ENCODE measurements at regions of chr2 and their contacts with region 1.

Region 1: DNA sequence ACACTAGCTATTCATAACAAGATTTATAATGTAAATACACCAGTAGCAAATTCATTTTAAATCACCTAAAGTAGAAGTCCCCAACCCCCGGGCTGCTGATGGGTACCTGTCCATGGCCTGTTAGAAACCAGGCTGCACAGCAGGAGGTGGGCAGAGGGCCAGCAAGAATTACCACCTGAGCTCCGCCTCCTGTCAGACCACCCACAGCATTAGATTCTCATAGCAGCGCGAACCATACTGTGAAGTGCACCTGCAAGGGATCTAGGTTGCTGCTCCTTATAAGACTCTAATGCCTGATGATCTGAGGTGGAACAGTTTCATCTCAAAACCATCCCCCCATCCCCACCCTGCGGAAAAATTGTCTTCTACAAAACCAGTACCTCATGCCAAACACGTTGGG is 71.3 kb downstream of the KANSL1L start:
- DNase-seq: no peak

Region 2: DNA sequence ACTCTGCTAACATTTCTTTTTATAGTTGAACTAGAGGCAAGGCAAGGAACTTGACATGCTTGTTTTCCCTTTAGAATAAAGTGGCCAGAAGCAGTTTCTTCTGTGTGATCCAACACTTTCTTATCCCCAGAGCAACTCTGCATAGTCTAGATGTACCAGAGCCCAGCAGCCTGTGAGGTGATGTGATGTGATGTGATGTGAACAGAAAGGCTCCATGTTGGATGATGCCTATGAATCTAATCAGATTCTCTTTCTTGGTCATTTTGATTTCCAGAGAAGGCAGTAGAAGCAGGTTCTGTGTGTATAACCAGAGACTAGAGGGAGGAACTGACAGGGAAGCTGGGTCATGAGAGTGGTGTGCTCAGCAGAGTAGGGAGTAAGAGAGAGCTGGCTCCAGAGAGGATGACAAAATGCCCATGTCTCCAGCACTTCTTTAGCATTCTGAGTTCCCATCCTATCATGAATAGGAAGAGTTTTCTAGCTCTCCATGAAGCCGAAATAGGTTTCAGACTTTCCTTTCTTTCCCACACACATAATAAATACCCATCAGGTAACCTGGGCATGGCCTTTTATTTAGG is 1724.4 kb before region 1 on chr2:
- intact Hi-C with region 1: loop called in 1 of 2 experiments (anchors 5 kb)
- DNase-seq: no peak

Region 3: GRCh38 chr2:209917154-209918047 is 182.5 kb before region 1 on chr2:
- intact Hi-C with region 1: no loop called
- DNase-seq: peak; percentile 63

Region 4: GRCh38 chr2:210527286-210527685 is 427.3 kb after region 1 on chr2:
- intact Hi-C with region 1: no loop called
- DNase-seq: no peak

Measured in posterior vena cava (tissue), 2 donors.